Heart left ventricle (tissue), 16 donors: ENCODE measurements at regions of chr1 and their contacts with region 1.

Region 1: DNA sequence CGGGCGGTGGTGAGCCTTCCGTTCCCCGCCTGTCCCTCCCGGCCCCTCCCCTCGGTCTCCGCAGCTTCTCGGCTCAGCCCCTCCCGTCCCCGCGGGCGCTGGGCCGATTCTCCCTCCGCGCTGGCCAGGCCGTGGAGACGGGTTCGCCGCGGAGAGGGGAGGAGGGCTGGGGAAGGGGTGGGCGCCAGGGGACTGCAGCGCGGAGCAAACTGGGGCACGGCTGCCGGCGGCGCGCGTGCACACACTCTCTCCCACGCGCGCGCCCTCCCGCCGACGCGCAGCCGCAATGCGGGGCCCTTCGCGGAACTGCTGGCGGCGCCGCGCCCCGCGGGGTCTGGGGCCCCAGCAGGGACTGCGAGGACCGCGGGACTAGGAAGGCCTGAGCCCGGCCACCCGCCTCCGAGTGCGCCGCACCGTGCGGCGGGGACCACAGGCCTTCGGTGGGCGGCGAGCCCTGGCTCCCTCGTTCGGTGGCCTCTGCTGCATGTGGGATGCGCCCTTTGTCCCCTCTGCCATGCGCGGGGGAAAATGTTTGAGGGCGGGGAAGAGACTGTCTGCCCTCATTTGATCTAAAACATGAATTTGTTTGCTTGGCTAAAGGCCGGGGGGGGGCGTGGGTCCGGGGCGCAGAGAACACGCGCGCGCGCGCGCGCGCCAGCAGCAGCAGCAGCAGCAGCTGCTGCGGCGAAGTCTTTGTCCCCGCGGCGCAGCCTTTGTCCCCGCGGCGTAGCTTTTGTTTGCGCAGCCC is 90.7 kb upstream of the VAMP3 start:
- DNase-seq: peak; percentile 51 to 81 (median 65)
- ATAC-seq: peak in 3 of 4 donors; percentile 68 to 82 (median 72)
- H3K4me3 ChIP-seq: peak overlapping the region; percentile 48 to 90 (median 75)
- H3K27ac ChIP-seq: peak overlapping the region in 9 of 12 donors; percentile 9 to 71 (median 54)
- H3K4me1 ChIP-seq: peaks cover 0 to 15% (median 6%) of the 10 kb centered on the region in 12 donors
- H3K27me3 ChIP-seq: no peaks in the 10 kb centered on the region
- CTCF ChIP-seq: no peak
- POLR2A ChIP-seq: no peak

Region 2: DNA sequence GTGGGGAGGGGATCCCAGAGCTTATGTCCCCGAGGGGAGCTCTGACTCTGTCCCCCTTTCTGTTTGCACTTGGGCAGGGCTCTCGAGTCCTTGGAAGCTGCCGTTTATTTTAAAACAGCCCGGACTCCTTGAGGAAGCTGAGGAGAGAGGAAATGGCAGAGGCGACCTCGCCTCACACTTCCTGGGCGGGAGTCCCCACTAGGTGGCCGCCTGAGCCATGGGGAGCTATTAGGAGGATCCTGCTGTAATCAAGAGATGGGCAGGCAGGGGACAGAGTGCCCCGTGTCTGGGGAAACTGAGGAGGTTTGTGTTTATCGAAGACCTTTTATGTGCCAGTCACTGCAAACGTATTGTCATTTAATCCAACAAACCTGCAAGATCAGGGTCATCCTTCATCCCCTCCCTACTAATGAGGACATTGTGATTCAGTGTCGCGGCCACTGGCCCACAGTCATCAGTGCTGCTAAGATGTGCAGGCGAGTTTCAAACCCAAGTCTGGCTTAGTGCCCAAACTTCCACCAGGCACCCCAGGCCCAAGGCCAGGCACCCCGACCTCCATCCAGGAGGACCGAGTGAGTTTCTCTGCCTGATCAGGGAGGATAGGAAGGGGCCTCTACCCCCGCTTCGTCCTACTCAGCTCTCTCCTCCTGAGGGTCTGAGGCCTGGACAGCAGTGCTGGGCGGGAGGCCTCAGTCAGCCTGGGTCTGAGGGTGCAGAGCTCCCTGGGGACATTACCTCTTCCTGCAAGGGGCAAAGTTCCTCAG is 226.1 kb before region 1 on chr1:
- intact Hi-C with region 1: no loop called
- DNase-seq: peak in 1 of 5 donors; percentile 32
- ATAC-seq: peak in 3 of 4 donors; percentile 31 to 71 (median 68)
- H3K4me3 ChIP-seq: no peak overlapping the region
- H3K27ac ChIP-seq: no peak overlapping the region
- H3K4me1 ChIP-seq: peaks cover 0 to 7% (median 0%) of the 10 kb centered on the region in 12 donors
- H3K27me3 ChIP-seq: no peaks in the 10 kb centered on the region
- CTCF ChIP-seq: peak; percentile 27 to 66 (median 44)
- POLR2A ChIP-seq: no peak

Region 3: GRCh38 chr1:7707527-7707926 is 27.1 kb after region 1 on chr1:
- intact Hi-C with region 1: loop called in 2 of 10 experiments (anchors 2 to 5 kb)
- DNase-seq: no peak
- ATAC-seq: no peak
- H3K4me3 ChIP-seq: no peak overlapping the region
- H3K27ac ChIP-seq: no peak overlapping the region
- H3K4me1 ChIP-seq: peaks cover 0 to 24% (median 6%) of the 10 kb centered on the region in 12 donors
- H3K27me3 ChIP-seq: peaks cover 0 to 24% (median 0%) of the 10 kb centered on the region in 9 donors
- CTCF ChIP-seq: no peak
- POLR2A ChIP-seq: no peak

Region 4: GRCh38 chr1:7712731-7713323 is 32.4 kb after region 1 on chr1:
- intact Hi-C with region 1: loop called in 1 of 10 experiments (anchors 5 kb)
- DNase-seq: no peak
- ATAC-seq: no peak
- H3K4me3 ChIP-seq: no peak overlapping the region
- H3K27ac ChIP-seq: no peak overlapping the region
- H3K4me1 ChIP-seq: no peaks in the 10 kb centered on the region
- H3K27me3 ChIP-seq: no peaks in the 10 kb centered on the region
- CTCF ChIP-seq: no peak
- POLR2A ChIP-seq: no peak